ENCODE measurements at regions of chr18 and their contacts with region 1.

Region 1: GRCh38 chr18:42114310-42114943 is 159.4 kb downstream of the PIK3C3 start:
- DNase-seq: peak; percentile 25
- H3K4me3 ChIP-seq: no peak overlapping the region
- H3K27ac ChIP-seq: peak overlapping the region; percentile 31
- H3K4me1 ChIP-seq: peaks cover 5% of the 10 kb centered on the region
- H3K27me3 ChIP-seq: no peaks in the 10 kb centered on the region
- CTCF ChIP-seq: peak; percentile 91

Region 2: DNA sequence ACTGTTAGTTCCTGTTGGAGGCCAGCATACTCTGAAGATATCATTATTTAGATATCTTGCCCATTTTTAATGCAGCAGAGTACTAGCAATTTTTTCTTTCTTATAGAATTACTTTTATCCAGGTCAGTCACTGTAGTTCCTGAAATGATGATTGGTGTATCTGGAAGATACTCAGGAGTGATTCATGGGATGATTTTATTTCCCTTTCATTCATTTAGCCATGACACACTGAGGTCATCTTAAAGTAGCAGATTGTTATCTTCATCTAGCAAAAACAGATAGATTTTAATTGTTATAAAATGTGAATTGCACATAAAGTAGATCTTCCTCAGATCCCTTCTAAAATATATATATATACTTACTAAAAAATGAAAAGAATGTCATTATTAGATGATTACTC is 50.3 kb before region 1 on chr18:
- intact Hi-C with region 1: no loop called
- DNase-seq: no peak
- H3K4me3 ChIP-seq: no peak overlapping the region
- H3K27ac ChIP-seq: no peak overlapping the region
- H3K4me1 ChIP-seq: no peaks in the 10 kb centered on the region
- H3K27me3 ChIP-seq: no peaks in the 10 kb centered on the region
- CTCF ChIP-seq: no peak

Region 3: GRCh38 chr18:42298759-42299675 is 184.6 kb after region 1 on chr18:
- intact Hi-C with region 1: loop called (anchors 10 kb)
- DNase-seq: peak; percentile 68
- H3K4me3 ChIP-seq: peak overlapping the region; percentile 51
- H3K27ac ChIP-seq: peak overlapping the region; percentile 64
- H3K4me1 ChIP-seq: peaks cover 7% of the 10 kb centered on the region
- H3K27me3 ChIP-seq: no peaks in the 10 kb centered on the region
- CTCF ChIP-seq: peak; percentile 93